HEK293 (cell line): ENCODE measurements at regions of chr19 and their contacts with region 1.

Region 1: GRCh38 chr19:41363753-41364523 is at the start of gene B9D2:
- H3K4me3 ChIP-seq: peak within 1 kb of the TSS; percentile 72
- H3K27ac ChIP-seq: peak within 1 kb of the TSS; percentile 74
- H3K4me1 ChIP-seq: 0 out of 2 replicates have a peak, but pooled peaks cover 5% of the 10 kb centered on the region
- CTCF ChIP-seq: no peak

Region 2: GRCh38 chr19:41353466-41354342 is 10.2 kb before region 1 on chr19 and contains the start of gene TGFB1:
- CTCF ChIA-PET with region 1: interaction called, 64 read pairs
- POLR2A ChIA-PET with region 1: interaction called, 73 read pairs
- H3K4me3 ChIP-seq: peak within 1 kb of the TSS; percentile 43
- H3K27ac ChIP-seq: peak within 1 kb of the TSS; percentile 77; the same call in 1 of the 2 replicates
- H3K4me1 ChIP-seq: peaks cover 5% of the 10 kb centered on the region; the same call in 1 of the 2 replicates
- CTCF ChIP-seq: peak; percentile 96

Region 3: DNA sequence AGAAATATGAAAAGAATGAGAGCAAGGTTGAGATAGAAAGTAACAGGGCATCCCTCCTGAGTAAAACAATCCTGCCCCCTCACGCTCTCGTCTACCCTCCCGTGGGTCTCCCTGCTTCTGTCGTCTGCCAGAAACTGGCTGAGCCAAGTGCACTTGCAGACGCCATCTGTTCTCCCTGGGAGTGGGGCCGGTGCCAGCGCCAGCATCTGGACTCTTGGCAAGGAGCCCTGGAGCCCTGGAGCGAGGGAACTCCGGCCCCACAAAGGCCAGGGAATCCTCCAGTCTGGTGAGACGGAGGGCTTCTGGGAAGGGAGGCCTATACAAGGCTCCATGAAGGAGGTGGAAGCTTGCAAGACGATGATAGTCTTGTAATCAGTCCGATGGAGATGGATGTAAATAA is 10.1 kb after region 1 on chr19:
- CTCF ChIA-PET with region 1: interaction called, 5 read pairs
- POLR2A ChIA-PET with region 1: interaction called, 64 read pairs
- H3K4me3 ChIP-seq: no peak overlapping the region
- H3K27ac ChIP-seq: peak overlapping the region; percentile 7; the same call in 1 of the 2 replicates
- H3K4me1 ChIP-seq: peaks cover 20% of the 10 kb centered on the region
- CTCF ChIP-seq: no peak

Region 4: GRCh38 chr19:41409288-41409687 is 45.4 kb after region 1 on chr19:
- CTCF ChIA-PET with region 1: no interaction called
- POLR2A ChIA-PET with region 1: interaction called, 10 read pairs
- H3K4me3 ChIP-seq: no peak overlapping the region
- H3K27ac ChIP-seq: no peak overlapping the region
- H3K4me1 ChIP-seq: peaks cover 5% of the 10 kb centered on the region; the same call in 1 of the 2 replicates
- CTCF ChIP-seq: no peak